ENCODE measurements at regions of chr16 and their contacts with region 1.

Region 1: DNA sequence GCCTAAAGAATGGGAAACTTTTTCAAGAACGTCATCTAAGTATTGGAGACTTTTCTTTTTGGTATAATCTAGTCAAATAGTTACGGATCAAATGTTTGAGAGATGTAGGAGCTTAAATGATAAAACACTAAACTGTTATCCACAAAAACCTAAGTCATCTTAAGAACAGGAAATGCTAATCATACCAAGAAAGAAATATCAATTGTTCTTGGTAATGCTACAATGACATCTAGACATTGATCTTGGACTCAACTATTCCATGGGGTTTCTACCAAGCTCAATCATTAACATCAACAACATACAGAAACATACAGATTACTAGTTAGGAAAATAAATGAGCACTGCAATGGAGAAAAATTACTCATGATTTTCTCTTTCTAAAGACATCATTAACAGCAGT is 3.8 kb downstream of the NUDT21 start:
- DNase-seq: no peak
- H3K4me3 ChIP-seq: no peak overlapping the region
- H3K27ac ChIP-seq: no peak overlapping the region
- H3K4me1 ChIP-seq: peaks cover 19% of the 10 kb centered on the region
- H3K27me3 ChIP-seq: no peaks in the 10 kb centered on the region

Region 2: GRCh38 chr16:56382901-56383355 is 64.4 kb before region 1 on chr16:
- in situ Hi-C with region 1: no loop called
- DNase-seq: peak; percentile 53
- H3K4me3 ChIP-seq: no peak overlapping the region
- H3K27ac ChIP-seq: 0 out of 2 replicates have a peak overlapping the region, but pooled peaks have one; percentile 3
- H3K4me1 ChIP-seq: peaks cover 23% of the 10 kb centered on the region
- H3K27me3 ChIP-seq: no peaks in the 10 kb centered on the region

Region 3: DNA sequence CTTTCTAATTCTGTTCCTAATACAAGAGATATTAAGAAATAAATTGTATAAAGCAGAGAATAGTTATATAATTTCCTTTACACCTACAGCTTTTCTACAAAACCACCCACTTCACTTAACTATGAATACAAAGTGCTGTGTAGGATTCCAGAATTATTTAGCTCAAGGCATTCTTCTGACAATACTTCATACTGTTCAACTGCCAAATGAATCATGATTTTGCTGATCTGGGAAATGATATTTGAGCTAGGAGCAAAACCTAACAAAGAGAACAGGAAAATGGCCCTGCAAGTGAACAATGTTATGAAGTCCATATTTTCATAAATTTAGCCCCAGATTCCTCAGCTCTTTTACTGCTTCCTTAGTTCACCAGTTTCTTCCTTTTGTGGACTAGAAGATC is 59.7 kb after region 1 on chr16:
- in situ Hi-C with region 1: loop called (anchors 10 kb)
- DNase-seq: peak; percentile 82
- H3K4me3 ChIP-seq: peak overlapping the region; percentile 27
- H3K27ac ChIP-seq: peak overlapping the region; percentile 70
- H3K4me1 ChIP-seq: peaks cover 20% of the 10 kb centered on the region
- H3K27me3 ChIP-seq: no peaks in the 10 kb centered on the region

Region 4: DNA sequence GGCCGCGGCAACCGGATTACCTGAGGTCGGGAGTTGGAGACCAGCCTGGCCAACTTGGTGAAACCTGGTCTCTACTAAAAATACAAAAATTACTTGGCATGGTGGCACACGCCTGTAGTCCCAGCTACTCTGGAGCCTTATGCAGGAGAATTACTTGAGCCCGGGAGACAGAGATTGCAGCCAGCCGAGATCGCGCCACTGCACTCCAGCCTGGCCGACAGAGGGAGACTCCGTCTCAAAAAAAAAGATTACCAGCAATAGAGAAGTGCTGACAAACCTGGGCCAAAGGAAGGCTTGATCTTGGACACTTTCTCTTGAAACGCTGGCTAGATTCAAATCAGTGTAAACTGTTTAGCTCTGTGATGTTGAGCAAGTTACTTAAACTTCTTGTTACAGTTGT is 226.6 kb after region 1 on chr16:
- in situ Hi-C with region 1: no loop called
- DNase-seq: peak; percentile 57
- H3K4me3 ChIP-seq: no peak overlapping the region
- H3K27ac ChIP-seq: no peak overlapping the region
- H3K4me1 ChIP-seq: no peaks in the 10 kb centered on the region
- H3K27me3 ChIP-seq: peaks cover 12% of the 10 kb centered on the region

Measured in GM23248 (cell line).